Activated CD4-positive, alpha-beta T cell treated with anti-CD3 and anti-CD28 coated beads, Interleukin-2, amount 10 ng/mL, durations not matched to agents 7 days and 5 days (primary cell): ENCODE measurements at regions of chr1 and their contacts with region 1.

Region 1: GRCh38 chr1:28088168-28088961 is at the start of gene EYA3:
- DNase-seq: peak; percentile 98
- H3K4me3 Mint-ChIP-seq: peak within 1 kb of the TSS; percentile 97
- H3K27ac Mint-ChIP-seq: peak within 1 kb of the TSS; percentile 96
- H3K4me1 Mint-ChIP-seq: peaks cover 35% of the 10 kb centered on the region
- H3K27me3 Mint-ChIP-seq: peaks cover 6% of the 10 kb centered on the region
- total RNA-seq, gene EYA3: 27.8 to 30.7 TPM

Region 2: DNA sequence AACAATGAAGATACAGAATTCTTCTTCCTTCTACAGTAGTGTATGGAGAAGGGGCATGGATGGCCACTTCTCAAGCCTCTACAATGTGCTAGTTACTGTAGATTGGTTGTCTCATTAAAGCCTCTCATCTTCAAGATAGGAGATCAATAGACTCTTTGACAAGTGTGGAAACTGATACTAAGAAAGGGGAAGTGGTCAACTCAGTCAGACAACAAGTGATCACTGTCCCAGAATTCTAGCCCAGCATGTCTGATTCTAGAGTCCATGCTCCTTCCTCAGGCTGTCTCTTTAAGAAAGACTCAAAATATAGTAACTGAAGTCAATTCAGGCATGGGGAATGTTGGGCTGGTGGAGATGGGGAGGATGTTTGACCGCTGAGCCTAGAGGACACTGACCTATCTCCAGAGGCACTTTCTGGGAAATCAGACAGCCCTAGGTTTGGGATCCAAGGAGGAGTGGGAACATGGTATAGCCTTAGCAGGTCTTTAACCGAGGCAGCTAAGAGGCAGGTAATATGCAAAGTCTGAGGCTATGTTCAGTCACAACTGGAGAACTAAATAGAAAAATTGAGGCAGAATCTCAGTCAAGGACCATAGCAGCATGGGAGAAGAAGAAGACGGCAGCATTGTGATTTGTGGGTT is 39.4 kb after region 1 on chr1:
- CTCF ChIA-PET with region 1: no interaction called
- POLR2A ChIA-PET with region 1: no interaction called
- DNase-seq: no peak
- H3K4me3 Mint-ChIP-seq: no peak overlapping the region
- H3K27ac Mint-ChIP-seq: no peak overlapping the region
- H3K4me1 Mint-ChIP-seq: no peaks in the 10 kb centered on the region
- H3K27me3 Mint-ChIP-seq: peaks cover 57% of the 10 kb centered on the region

Region 3: GRCh38 chr1:28208818-28209441 is 120.6 kb after region 1 on chr1:
- CTCF ChIA-PET with region 1: interaction called, 20 read pairs
- POLR2A ChIA-PET with region 1: interaction called, 3 read pairs
- DNase-seq: peak; percentile 80
- H3K4me3 Mint-ChIP-seq: no peak overlapping the region
- H3K27ac Mint-ChIP-seq: no peak overlapping the region
- H3K4me1 Mint-ChIP-seq: peaks cover 11% of the 10 kb centered on the region
- H3K27me3 Mint-ChIP-seq: no peaks in the 10 kb centered on the region